ENCODE measurements at regions of chr2 and their contacts with region 1.

Region 1: GRCh38 chr2:41966431-41966893 is 81.4 kb upstream of the PKDCC start:
- DNase-seq: peak; percentile 78 to 91 (median 87)
- ATAC-seq: peak; percentile 63 to 91 (median 84)
- H3K4me3 ChIP-seq: no peak overlapping the region
- H3K27ac ChIP-seq: peak overlapping the region; percentile 37 to 88 (median 72)
- H3K4me1 ChIP-seq: peaks cover 0 to 60% (median 32%) of the 10 kb centered on the region in 12 donors
- H3K27me3 ChIP-seq: no peaks in the 10 kb centered on the region
- CTCF ChIP-seq: no peak
- POLR2A ChIP-seq: no peak

Region 2: DNA sequence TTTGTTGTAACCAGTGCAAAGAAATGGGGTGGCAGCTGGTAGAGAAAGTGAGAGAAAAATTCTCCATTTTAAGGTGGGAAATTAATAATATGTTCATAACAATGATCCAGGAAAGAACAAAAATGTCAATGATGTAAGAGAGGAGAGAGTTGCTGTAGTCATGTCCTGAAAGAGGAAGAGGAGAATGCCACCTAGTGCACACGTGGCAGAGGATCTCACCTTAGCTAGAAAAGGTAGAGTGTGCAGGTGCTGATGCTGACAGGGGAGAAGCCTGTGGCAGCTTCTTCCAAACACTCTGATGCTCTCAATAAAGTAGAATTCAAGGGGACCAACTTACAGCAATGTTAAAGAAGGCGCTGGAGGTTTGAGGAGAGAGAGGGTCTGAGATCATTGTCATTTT is 201.5 kb before region 1 on chr2:
- intact Hi-C with region 1: no loop called
- DNase-seq: no peak
- ATAC-seq: no peak
- H3K4me3 ChIP-seq: no peak overlapping the region
- H3K27ac ChIP-seq: no peak overlapping the region
- H3K4me1 ChIP-seq: peaks cover 0 to 15% (median 0%) of the 10 kb centered on the region in 12 donors
- H3K27me3 ChIP-seq: no peaks in the 10 kb centered on the region
- CTCF ChIP-seq: no peak
- POLR2A ChIP-seq: no peak

Region 3: GRCh38 chr2:41899189-41899588 is 67.3 kb before region 1 on chr2:
- intact Hi-C with region 1: no loop called
- DNase-seq: no peak
- ATAC-seq: no peak
- H3K4me3 ChIP-seq: no peak overlapping the region
- H3K27ac ChIP-seq: no peak overlapping the region
- H3K4me1 ChIP-seq: peaks cover 0 to 11% (median 0%) of the 10 kb centered on the region in 12 donors
- H3K27me3 ChIP-seq: no peaks in the 10 kb centered on the region
- CTCF ChIP-seq: no peak
- POLR2A ChIP-seq: no peak

Region 4: GRCh38 chr2:41912337-41912736 is 54.1 kb before region 1 on chr2:
- intact Hi-C with region 1: loop called in 1 of 10 experiments (anchors 2 kb)
- DNase-seq: no peak
- ATAC-seq: peak; percentile 49 to 79 (median 76)
- H3K4me3 ChIP-seq: no peak overlapping the region
- H3K27ac ChIP-seq: peak overlapping the region in 5 of 12 donors; percentile 7 to 47 (median 25)
- H3K4me1 ChIP-seq: peaks cover 0 to 18% (median 4%) of the 10 kb centered on the region in 12 donors
- H3K27me3 ChIP-seq: no peaks in the 10 kb centered on the region
- CTCF ChIP-seq: no peak
- POLR2A ChIP-seq: no peak

Region 5: GRCh38 chr2:41933585-41934320 is 32.7 kb before region 1 on chr2:
- intact Hi-C with region 1: loop called in 1 of 10 experiments (anchors 5 kb)
- DNase-seq: no peak
- ATAC-seq: peak in 3 of 4 donors; percentile 12 to 53 (median 20)
- H3K4me3 ChIP-seq: no peak overlapping the region
- H3K27ac ChIP-seq: peak overlapping the region; percentile 12 to 78 (median 61)
- H3K4me1 ChIP-seq: peaks cover 0 to 64% (median 34%) of the 10 kb centered on the region in 12 donors
- H3K27me3 ChIP-seq: no peaks in the 10 kb centered on the region
- CTCF ChIP-seq: no peak
- POLR2A ChIP-seq: no peak

Region 6: DNA sequence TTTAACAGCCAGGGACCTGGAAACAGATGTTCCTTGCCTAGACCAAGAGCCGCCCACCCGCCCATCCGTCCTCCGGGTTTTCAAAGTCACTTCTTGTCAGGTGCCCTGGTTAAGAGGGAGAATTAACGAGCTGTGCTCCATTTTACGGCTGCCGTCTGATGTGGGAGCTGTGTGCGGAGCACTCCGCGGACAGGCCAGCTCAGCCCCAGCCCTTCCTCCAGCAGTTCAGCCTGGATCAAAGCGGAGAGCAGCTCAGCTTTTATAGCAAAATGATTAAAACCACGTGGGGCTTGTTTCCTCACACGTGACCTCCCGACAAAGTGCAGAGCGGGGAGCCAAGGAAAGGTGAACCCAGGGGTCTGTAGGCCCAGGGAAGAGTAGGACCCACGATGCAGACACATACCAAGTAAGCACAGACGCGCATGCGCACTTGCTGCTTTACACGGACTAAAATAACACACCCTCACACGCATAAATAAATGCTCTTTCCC is 35.3 kb after region 1 on chr2:
- intact Hi-C with region 1: loop called in 1 of 10 experiments (anchors 5 kb)
- DNase-seq: no peak
- ATAC-seq: no peak
- H3K4me3 ChIP-seq: no peak overlapping the region
- H3K27ac ChIP-seq: no peak overlapping the region
- H3K4me1 ChIP-seq: peaks cover 0 to 22% (median 8%) of the 10 kb centered on the region in 12 donors
- H3K27me3 ChIP-seq: no peaks in the 10 kb centered on the region
- CTCF ChIP-seq: no peak
- POLR2A ChIP-seq: no peak

Region 7: GRCh38 chr2:42040643-42041278 is 74.3 kb after region 1 on chr2:
- intact Hi-C with region 1: no loop called
- DNase-seq: no peak
- ATAC-seq: peak in 2 of 4 donors; percentile 31 to 40
- H3K4me3 ChIP-seq: no peak overlapping the region
- H3K27ac ChIP-seq: peak overlapping the region in 1 of 12 donors; percentile 8
- H3K4me1 ChIP-seq: peaks cover 0 to 15% (median 4%) of the 10 kb centered on the region in 12 donors
- H3K27me3 ChIP-seq: peaks cover 0 to 7% (median 0%) of the 10 kb centered on the region in 9 donors
- CTCF ChIP-seq: peak in 1 of 12 donors; percentile 11
- POLR2A ChIP-seq: no peak

Region 8: DNA sequence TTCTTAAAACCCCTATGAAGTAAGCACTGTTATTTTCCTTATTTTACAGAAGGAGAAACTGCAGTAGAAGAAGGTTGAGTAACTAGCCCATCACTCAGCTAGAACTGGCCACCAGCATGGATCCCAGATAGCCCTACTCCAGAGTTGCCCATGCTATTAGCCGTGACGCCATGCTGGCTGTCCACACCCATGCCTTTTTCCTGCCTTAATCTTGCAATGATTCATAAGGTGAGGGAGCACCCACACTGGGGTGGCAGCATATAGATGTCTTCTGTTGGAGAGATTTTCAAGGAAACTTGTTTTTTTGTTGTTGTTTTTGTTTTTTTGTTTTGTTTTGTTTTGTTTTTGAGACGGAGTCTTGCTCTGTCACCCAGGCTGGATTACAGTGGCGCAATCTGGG is 1030.1 kb after region 1 on chr2:
- intact Hi-C with region 1: no loop called
- DNase-seq: peak in 1 of 5 donors; percentile 4
- ATAC-seq: no peak
- H3K4me3 ChIP-seq: no peak overlapping the region
- H3K27ac ChIP-seq: no peak overlapping the region
- H3K4me1 ChIP-seq: peaks cover 0 to 9% (median 0%) of the 10 kb centered on the region in 12 donors
- H3K27me3 ChIP-seq: no peaks in the 10 kb centered on the region
- CTCF ChIP-seq: no peak
- POLR2A ChIP-seq: no peak